PC-3 (cell line): ENCODE measurements at regions of chr5 and their contacts with region 1.

Region 1: DNA sequence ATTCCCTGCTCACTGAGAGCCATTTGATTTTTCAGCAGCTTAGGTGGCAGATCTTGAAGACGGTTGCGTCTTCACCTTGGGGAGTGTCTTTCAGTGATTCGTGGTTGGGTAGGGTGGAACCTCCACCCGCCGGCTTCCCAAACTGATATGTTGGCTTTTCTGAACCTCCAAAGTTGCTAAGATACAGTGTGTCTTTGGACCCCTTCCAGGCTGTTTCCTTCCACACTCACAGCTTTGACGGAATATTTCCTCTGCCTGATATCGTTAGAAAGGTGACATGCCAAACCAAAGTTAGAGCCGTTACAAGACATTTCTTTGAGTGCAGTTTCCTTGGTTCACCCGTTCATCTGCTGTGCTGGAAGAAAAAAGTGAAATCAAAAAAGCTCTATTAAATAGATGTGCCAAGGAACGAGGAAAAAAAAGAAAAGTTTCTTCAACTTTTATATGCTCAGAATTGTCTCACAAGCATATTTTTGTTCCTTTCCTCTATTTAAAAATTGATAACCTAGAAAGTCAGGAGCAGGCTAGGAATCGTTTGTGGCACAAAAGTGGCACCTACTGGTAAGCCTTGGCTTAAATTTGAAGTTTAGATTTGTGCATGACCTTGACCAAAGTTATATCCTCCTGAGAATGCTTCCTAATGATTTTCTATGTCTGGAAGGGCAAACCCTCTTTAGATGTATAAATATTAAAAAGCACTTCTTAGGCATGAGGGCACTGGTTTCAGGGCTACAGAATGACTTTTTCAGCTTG is 270.7 kb upstream of the WWC1 start:
- DNase-seq: peak; percentile 22
- ATAC-seq: no peak
- H3K4me3 ChIP-seq: no peak overlapping the region
- H3K27ac ChIP-seq: no peak overlapping the region
- H3K4me1 ChIP-seq: no peaks in the 10 kb centered on the region
- H3K27me3 ChIP-seq: peaks cover 97% of the 10 kb centered on the region
- CTCF ChIP-seq: peak; percentile 41

Region 2: GRCh38 chr5:167582283-167582682 is 438.4 kb before region 1 on chr5:
- CTCF ChIA-PET with region 1: no interaction called
- POLR2A ChIA-PET with region 1: no interaction called
- intact Hi-C with region 1: loop called (anchors 2 kb)
- DNase-seq: peak; percentile 50
- ATAC-seq: peak; percentile 59
- H3K4me3 ChIP-seq: no peak overlapping the region
- H3K27ac ChIP-seq: no peak overlapping the region
- H3K4me1 ChIP-seq: no peaks in the 10 kb centered on the region
- H3K27me3 ChIP-seq: peaks cover 64% of the 10 kb centered on the region
- CTCF ChIP-seq: peak; percentile 60; the same call in 1 of the 2 replicates